ENCODE measurements at regions of chr1 and their contacts with region 1.

Region 1: GRCh38 chr1:175221666-175222175 is 29.1 kb upstream of the KIAA0040 start:
- DNase-seq: peak; percentile 63
- ATAC-seq: peak; percentile 87
- H3K4me3 Mint-ChIP-seq: no peak overlapping the region
- H3K27ac Mint-ChIP-seq: peak overlapping the region; percentile 75
- H3K4me1 Mint-ChIP-seq: peaks cover 31% of the 10 kb centered on the region
- H3K27me3 Mint-ChIP-seq: no peaks in the 10 kb centered on the region
- CTCF ChIP-seq: no peak

Region 2: GRCh38 chr1:175089136-175089718 is 132.5 kb before region 1 on chr1:
- CTCF ChIA-PET with region 1: no interaction called
- POLR2A ChIA-PET with region 1: no interaction called
- DNase-seq: no peak
- ATAC-seq: no peak
- H3K4me3 Mint-ChIP-seq: no peak overlapping the region
- H3K27ac Mint-ChIP-seq: no peak overlapping the region
- H3K4me1 Mint-ChIP-seq: peaks cover 4% of the 10 kb centered on the region; the same call in 1 of the 2 replicates
- H3K27me3 Mint-ChIP-seq: no peaks in the 10 kb centered on the region
- CTCF ChIP-seq: no peak

Region 3: GRCh38 chr1:175162955-175163354 is 58.8 kb before region 1 on chr1:
- CTCF ChIA-PET with region 1: interaction called, 12 read pairs
- POLR2A ChIA-PET with region 1: no interaction called
- DNase-seq: no peak
- ATAC-seq: no peak
- H3K4me3 Mint-ChIP-seq: no peak overlapping the region
- H3K27ac Mint-ChIP-seq: no peak overlapping the region
- H3K4me1 Mint-ChIP-seq: no peaks in the 10 kb centered on the region
- H3K27me3 Mint-ChIP-seq: no peaks in the 10 kb centered on the region
- CTCF ChIP-seq: no peak

Region 4: GRCh38 chr1:175192630-175193526 is 28.8 kb before region 1 on chr1 and contains the start of gene KIAA0040:
- CTCF ChIA-PET with region 1: interaction called, 14 read pairs
- POLR2A ChIA-PET with region 1: no interaction called
- DNase-seq: peak; percentile 72
- ATAC-seq: peak; percentile 86
- H3K4me3 Mint-ChIP-seq: peak within 1 kb of the TSS; percentile 90
- H3K27ac Mint-ChIP-seq: peak within 1 kb of the TSS; percentile 27; the same call in 1 of the 2 replicates
- H3K4me1 Mint-ChIP-seq: peaks cover 16% of the 10 kb centered on the region
- H3K27me3 Mint-ChIP-seq: peaks cover 25% of the 10 kb centered on the region
- CTCF ChIP-seq: no peak
- total RNA-seq, gene KIAA0040: 8.8 to 15.0 TPM (median 11.9 TPM) in 3 replicates

Region 5: DNA sequence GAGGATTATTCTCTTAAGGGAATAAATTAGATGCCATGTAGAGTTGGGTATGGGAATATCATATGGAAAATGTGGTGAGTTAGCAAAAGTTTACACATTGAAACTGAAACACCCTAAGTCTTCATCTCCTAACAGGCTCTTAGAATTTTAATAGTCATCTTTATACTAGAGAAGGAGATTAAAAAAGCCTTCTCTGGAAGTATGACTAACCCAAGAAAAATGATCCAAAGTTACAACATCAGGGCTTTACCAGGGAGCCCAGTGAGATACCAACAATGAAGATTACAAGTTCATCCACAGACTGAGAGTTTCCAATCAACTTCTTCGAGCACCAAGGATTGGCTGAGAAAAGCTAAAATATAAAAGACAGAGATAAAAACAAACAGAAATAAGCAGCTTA is 40.9 kb after region 1 on chr1:
- CTCF ChIA-PET with region 1: no interaction called
- POLR2A ChIA-PET with region 1: no interaction called
- DNase-seq: no peak
- ATAC-seq: no peak
- H3K4me3 Mint-ChIP-seq: no peak overlapping the region
- H3K27ac Mint-ChIP-seq: no peak overlapping the region
- H3K4me1 Mint-ChIP-seq: no peaks in the 10 kb centered on the region
- H3K27me3 Mint-ChIP-seq: peaks cover 37% of the 10 kb centered on the region
- CTCF ChIP-seq: no peak

Measured in WTC11 (cell line).